ENCODE measurements at regions of chr13 and their contacts with region 1.

Region 1: GRCh38 chr13:91313103-91313502 is 34.4 kb upstream of the MIR17HG start:
- DNase-seq: peak; percentile 14
- H3K4me3 Mint-ChIP-seq: peak overlapping the region; percentile 5
- H3K27ac Mint-ChIP-seq: no peak overlapping the region
- H3K4me1 Mint-ChIP-seq: peaks cover 8% of the 10 kb centered on the region
- H3K27me3 Mint-ChIP-seq: peaks cover 12% of the 10 kb centered on the region

Region 2: GRCh38 chr13:91174886-91175501 is 138.1 kb before region 1 on chr13:
- CTCF ChIA-PET with region 1: no interaction called
- POLR2A ChIA-PET with region 1: no interaction called
- intact Hi-C with region 1: no loop called
- DNase-seq: no peak
- H3K4me3 Mint-ChIP-seq: no peak overlapping the region
- H3K27ac Mint-ChIP-seq: no peak overlapping the region
- H3K4me1 Mint-ChIP-seq: peaks cover 3% of the 10 kb centered on the region
- H3K27me3 Mint-ChIP-seq: peaks cover 8% of the 10 kb centered on the region

Region 3: DNA sequence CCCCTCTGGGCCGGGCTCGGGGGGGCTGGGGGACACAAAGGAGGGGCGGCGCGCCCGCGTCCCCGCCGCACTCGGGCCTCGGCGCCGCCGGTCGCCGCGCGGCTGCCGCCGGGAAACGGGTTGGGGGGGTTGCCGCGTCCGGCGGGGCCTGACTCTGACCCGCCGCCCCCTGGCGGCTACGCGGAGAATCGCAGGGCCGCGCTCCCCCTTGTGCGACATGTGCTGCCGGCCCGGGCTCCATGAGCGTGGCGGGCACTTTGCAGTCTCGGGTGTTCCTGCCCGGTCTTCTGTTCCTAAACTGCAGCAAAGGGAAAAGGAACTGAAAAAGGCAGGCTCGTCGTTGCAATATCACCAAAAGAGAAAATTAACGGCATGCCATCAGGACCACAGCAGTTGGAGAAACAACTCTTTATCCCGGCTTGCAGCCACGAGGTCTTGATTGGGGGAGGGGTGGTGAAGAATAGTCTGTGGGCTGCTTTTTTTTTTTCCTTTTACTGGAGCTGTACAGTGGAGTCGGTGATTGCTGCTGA is 35.9 kb after region 1 on chr13:
- CTCF ChIA-PET with region 1: interaction called, 16 read pairs
- POLR2A ChIA-PET with region 1: interaction called, 10 read pairs
- intact Hi-C with region 1: loop called (anchors 1 kb)
- DNase-seq: peak; percentile 93
- H3K4me3 Mint-ChIP-seq: peak overlapping the region; percentile 98
- H3K27ac Mint-ChIP-seq: peak overlapping the region; percentile 94
- H3K4me1 Mint-ChIP-seq: peaks cover 54% of the 10 kb centered on the region
- H3K27me3 Mint-ChIP-seq: no peaks in the 10 kb centered on the region

Region 4: GRCh38 chr13:91369441-91369831 is 56.3 kb after region 1 on chr13:
- CTCF ChIA-PET with region 1: interaction called, 4 read pairs
- POLR2A ChIA-PET with region 1: no interaction called
- intact Hi-C with region 1: loop called (anchors 5 kb)
- DNase-seq: peak; percentile 59
- H3K4me3 Mint-ChIP-seq: no peak overlapping the region
- H3K27ac Mint-ChIP-seq: no peak overlapping the region
- H3K4me1 Mint-ChIP-seq: peaks cover 27% of the 10 kb centered on the region
- H3K27me3 Mint-ChIP-seq: peaks cover 2% of the 10 kb centered on the region

Region 5: GRCh38 chr13:91406619-91407018 is 93.5 kb after region 1 on chr13:
- CTCF ChIA-PET with region 1: interaction called, 33 read pairs
- POLR2A ChIA-PET with region 1: no interaction called
- intact Hi-C with region 1: loop called (anchors 1 kb)
- DNase-seq: peak; percentile 21
- H3K4me3 Mint-ChIP-seq: no peak overlapping the region
- H3K27ac Mint-ChIP-seq: no peak overlapping the region
- H3K4me1 Mint-ChIP-seq: no peaks in the 10 kb centered on the region
- H3K27me3 Mint-ChIP-seq: peaks cover 11% of the 10 kb centered on the region

Measured in activated CD4-positive, alpha-beta memory T cell treated with anti-CD3 and anti-CD28 coated beads for 36 hours (primary cell).